ENCODE measurements at regions of chr7 and their contacts with region 1.

Region 1: GRCh38 chr7:123797673-123798527 is 47.1 kb upstream of the HYAL4 start:
- DNase-seq: no peak
- ATAC-seq: peak; percentile 42
- H3K4me3 Mint-ChIP-seq: no peak overlapping the region
- H3K27ac Mint-ChIP-seq: no peak overlapping the region
- H3K4me1 Mint-ChIP-seq: peaks cover 3% of the 10 kb centered on the region
- H3K27me3 Mint-ChIP-seq: peaks cover 4% of the 10 kb centered on the region

Region 2: GRCh38 chr7:123682690-123683089 is 115.2 kb before region 1 on chr7:
- CTCF ChIA-PET with region 1: interaction called, 4 read pairs
- POLR2A ChIA-PET with region 1: no interaction called
- intact Hi-C with region 1: loop called in 1 of 2 experiments (anchors 1 kb)
- DNase-seq: peak; percentile 11
- ATAC-seq: no peak
- H3K4me3 Mint-ChIP-seq: no peak overlapping the region
- H3K27ac Mint-ChIP-seq: no peak overlapping the region
- H3K4me1 Mint-ChIP-seq: no peaks in the 10 kb centered on the region
- H3K27me3 Mint-ChIP-seq: no peaks in the 10 kb centered on the region

Region 3: GRCh38 chr7:123871998-123872867 is 74.3 kb after region 1 on chr7:
- CTCF ChIA-PET with region 1: interaction called, 33 read pairs
- POLR2A ChIA-PET with region 1: no interaction called
- intact Hi-C with region 1: no loop called
- DNase-seq: peak; percentile 65
- ATAC-seq: peak; percentile 82
- H3K4me3 Mint-ChIP-seq: no peak overlapping the region
- H3K27ac Mint-ChIP-seq: no peak overlapping the region
- H3K4me1 Mint-ChIP-seq: peaks cover 3% of the 10 kb centered on the region
- H3K27me3 Mint-ChIP-seq: peaks cover 4% of the 10 kb centered on the region

Region 4: GRCh38 chr7:123879628-123880027 is 81.7 kb after region 1 on chr7:
- CTCF ChIA-PET with region 1: interaction called, 11 read pairs
- POLR2A ChIA-PET with region 1: no interaction called
- intact Hi-C with region 1: no loop called
- DNase-seq: no peak
- ATAC-seq: no peak
- H3K4me3 Mint-ChIP-seq: no peak overlapping the region
- H3K27ac Mint-ChIP-seq: no peak overlapping the region
- H3K4me1 Mint-ChIP-seq: no peaks in the 10 kb centered on the region
- H3K27me3 Mint-ChIP-seq: peaks cover 3% of the 10 kb centered on the region

Region 5: DNA sequence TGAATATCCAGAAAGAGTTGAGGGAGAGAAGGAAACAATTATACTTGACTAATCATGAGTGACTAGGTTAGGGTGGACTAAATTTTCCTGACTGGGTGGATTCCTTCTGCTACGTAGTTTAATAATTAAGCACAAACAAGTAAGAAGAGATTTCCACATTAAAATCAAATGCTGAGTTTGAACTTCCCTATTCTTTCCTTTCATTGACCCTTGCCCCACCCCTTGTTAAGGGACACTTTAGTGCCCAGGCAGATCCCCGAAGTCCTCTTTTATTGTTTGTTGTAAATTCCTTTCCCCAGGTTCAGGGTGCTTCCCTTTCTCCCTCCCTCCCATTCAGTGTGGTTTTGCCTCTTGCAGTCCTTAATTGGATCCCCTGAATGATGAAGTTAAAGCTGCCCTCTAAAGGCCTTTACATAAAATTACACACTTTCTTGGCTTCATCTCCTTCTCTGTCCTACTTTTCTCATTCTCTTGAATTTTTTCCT is 118.4 kb after region 1 on chr7:
- CTCF ChIA-PET with region 1: no interaction called
- POLR2A ChIA-PET with region 1: no interaction called
- intact Hi-C with region 1: loop called in 1 of 2 experiments (anchors 2 kb)
- DNase-seq: no peak
- ATAC-seq: no peak
- H3K4me3 Mint-ChIP-seq: no peak overlapping the region
- H3K27ac Mint-ChIP-seq: no peak overlapping the region
- H3K4me1 Mint-ChIP-seq: no peaks in the 10 kb centered on the region
- H3K27me3 Mint-ChIP-seq: peaks cover 5% of the 10 kb centered on the region

Measured in activated CD4-positive, alpha-beta T cell treated with anti-CD3 and anti-CD28 coated beads for 36 hours (primary cell).